ENCODE measurements at regions of chr1 and their contacts with region 1.

Region 1: GRCh38 chr1:231315887-231316286 is 21.8 kb downstream of the EXOC8 start:
- DNase-seq: no peak
- ATAC-seq: peak; percentile 99
- H3K4me3 ChIP-seq: no peak overlapping the region
- H3K27ac ChIP-seq: no peak overlapping the region
- H3K4me1 ChIP-seq: no peaks in the 10 kb centered on the region
- H3K27me3 ChIP-seq: no peaks in the 10 kb centered on the region
- CTCF ChIP-seq: peak; percentile 71 to 84 (median 82)
- EP300 ChIP-seq: no peak
- POLR2A ChIP-seq: no peak
- RAD21 ChIP-seq: peak; percentile 75

Region 2: DNA sequence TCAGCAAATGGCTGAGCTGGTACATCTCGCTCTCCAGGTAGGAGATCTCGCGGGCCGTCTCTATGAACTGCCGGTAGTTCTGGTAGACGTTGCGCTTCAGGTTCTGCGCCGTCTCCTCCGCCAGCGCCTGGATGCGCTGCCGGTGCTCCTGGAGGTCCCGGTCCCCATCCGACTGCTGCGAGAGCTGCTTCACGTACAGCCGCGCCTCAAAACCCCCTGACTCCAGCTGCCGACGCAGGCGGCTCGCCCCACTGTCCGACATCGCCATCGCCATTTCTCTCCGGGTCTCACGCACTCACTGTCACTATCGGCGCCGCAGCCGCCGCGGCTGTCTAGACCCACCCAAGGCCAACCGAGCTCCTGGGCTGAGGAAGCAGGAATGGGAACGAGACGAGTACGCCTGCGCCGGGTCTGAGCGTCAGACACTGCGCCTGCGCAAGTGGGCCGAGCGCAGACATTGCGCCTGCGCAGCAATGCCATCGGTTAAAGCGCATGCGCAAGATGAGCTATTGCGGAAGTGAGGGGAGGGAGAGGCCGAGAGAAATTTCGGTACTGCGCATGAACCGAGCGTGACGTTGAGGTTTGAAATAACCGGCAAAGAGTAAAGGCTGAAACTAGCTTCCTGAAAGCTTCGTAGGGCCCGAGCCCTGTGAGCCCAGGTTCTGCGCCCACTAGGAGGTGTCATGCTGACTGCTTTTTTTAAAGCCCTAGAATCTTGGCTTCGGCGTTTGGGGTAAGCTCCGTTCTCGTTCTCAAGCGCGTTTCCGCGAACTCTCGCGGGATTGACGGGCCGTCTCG is 21.8 kb after region 1 on chr1 and contains the start of gene EXOC8:
- CTCF ChIA-PET with region 1: interaction called, 28 read pairs
- POLR2A ChIA-PET with region 1: no interaction called
- RAD21 ChIA-PET with region 1: interaction called, 3 read pairs
- SMC1A ChIA-PET with region 1: interaction called, 5 read pairs
- in situ Hi-C with region 1: no loop called
- intact Hi-C with region 1: no loop called
- DNase-seq: peak; percentile 99
- ATAC-seq: peak; percentile 84
- H3K4me3 ChIP-seq: peak within 1 kb of the TSS; percentile 91
- H3K27ac ChIP-seq: peak within 1 kb of the TSS; percentile 95
- H3K4me1 ChIP-seq: peaks cover 8% of the 10 kb centered on the region
- H3K27me3 ChIP-seq: no peaks in the 10 kb centered on the region
- CTCF ChIP-seq: peak; percentile 3 to 29 (median 10); a peak in 2 of 6 replicates
- EP300 ChIP-seq: no peak
- POLR2A ChIP-seq: peak; percentile 88
- RAD21 ChIP-seq: no peak
- polyA plus RNA-seq, gene EXOC8: 2.0 to 3.2 TPM

Region 3: GRCh38 chr1:231590453-231591198 is 274.7 kb after region 1 on chr1:
- CTCF ChIA-PET with region 1: interaction called, 22 read pairs
- POLR2A ChIA-PET with region 1: no interaction called
- RAD21 ChIA-PET with region 1: interaction called, 3 read pairs
- SMC1A ChIA-PET with region 1: interaction called, 4 read pairs
- in situ Hi-C with region 1: no loop called
- intact Hi-C with region 1: no loop called
- DNase-seq: no peak
- ATAC-seq: peak; percentile 93
- H3K4me3 ChIP-seq: no peak overlapping the region
- H3K27ac ChIP-seq: no peak overlapping the region
- H3K4me1 ChIP-seq: no peaks in the 10 kb centered on the region
- H3K27me3 ChIP-seq: no peaks in the 10 kb centered on the region
- CTCF ChIP-seq: peak; percentile 74 to 88 (median 80)
- EP300 ChIP-seq: no peak
- POLR2A ChIP-seq: no peak
- RAD21 ChIP-seq: peak; percentile 84

Region 4: DNA sequence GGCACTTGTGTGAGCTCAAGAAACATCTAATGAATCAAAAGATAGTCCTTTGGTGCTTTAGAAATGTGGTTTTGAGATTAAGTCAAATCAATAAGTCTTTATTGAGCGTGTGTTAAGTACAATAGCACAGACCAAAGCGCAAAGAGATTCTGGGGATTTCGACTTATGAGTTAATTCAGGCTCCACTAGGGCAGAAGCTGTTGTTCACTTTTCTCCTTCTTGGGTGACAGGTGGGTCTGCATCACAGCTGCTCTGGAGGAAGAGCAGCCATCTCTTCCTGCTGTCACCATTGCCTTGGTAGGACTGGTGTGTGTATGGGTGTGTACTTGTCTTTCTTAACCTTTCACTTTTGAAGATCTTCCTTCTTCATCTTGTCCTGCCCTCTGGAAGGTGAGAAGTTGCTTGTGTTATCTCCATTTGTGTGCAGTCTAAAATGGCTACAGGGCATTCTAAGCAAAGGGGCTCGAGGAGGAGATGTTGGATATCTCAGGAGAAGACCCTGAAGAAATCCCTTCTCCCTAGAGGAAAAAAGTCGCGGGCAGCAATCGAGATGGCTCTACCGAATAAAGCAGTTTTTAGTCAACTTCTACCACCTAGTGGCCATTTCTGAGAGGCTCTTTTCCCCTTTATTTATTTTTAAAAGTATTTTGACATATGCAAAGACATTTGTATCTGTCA is 287.9 kb after region 1 on chr1:
- CTCF ChIA-PET with region 1: interaction called, 13 read pairs
- POLR2A ChIA-PET with region 1: no interaction called
- RAD21 ChIA-PET with region 1: interaction called, 4 read pairs
- SMC1A ChIA-PET with region 1: interaction called, 5 read pairs
- in situ Hi-C with region 1: no loop called
- intact Hi-C with region 1: no loop called
- DNase-seq: no peak
- ATAC-seq: peak; percentile 82
- H3K4me3 ChIP-seq: peak overlapping the region; percentile 58
- H3K27ac ChIP-seq: no peak overlapping the region
- H3K4me1 ChIP-seq: no peaks in the 10 kb centered on the region
- H3K27me3 ChIP-seq: peaks cover 3% of the 10 kb centered on the region in 2 experiments; a peak in 2 of 4 replicates
- CTCF ChIP-seq: peak; percentile 52 to 75 (median 71)
- EP300 ChIP-seq: no peak
- POLR2A ChIP-seq: no peak
- RAD21 ChIP-seq: peak; percentile 83